ENCODE measurements at regions of chr19 and their contacts with region 1.

Region 1: GRCh38 chr19:7137120-7137519 is 67.6 kb downstream of the ZNF557 start:
- DNase-seq: no peak
- H3K4me3 ChIP-seq: no peak overlapping the region
- H3K27ac ChIP-seq: no peak overlapping the region
- H3K4me1 ChIP-seq: no peaks in the 10 kb centered on the region
- H3K27me3 ChIP-seq: no peaks in the 10 kb centered on the region
- CTCF ChIP-seq: no peak

Region 2: DNA sequence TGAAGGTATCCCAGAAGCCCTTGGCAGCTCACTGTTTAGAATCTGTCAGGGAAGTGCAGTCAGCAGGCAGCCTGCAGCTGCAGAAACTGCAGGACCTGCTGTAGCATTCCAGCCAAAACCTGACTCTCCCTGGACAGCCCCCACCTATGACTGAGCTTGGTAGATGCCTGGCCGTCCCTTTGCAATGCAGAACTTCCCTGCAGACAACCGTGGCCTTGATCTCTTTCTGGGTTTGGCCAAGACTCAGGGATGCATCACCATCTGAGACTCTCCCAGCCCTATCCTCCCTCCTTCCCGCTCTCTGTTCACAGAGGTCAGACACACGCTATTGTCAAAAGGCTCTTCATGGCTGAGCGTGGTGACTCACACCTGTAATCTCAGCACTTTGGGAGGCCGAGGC is 31.8 kb after region 1 on chr19:
- CTCF ChIA-PET with region 1: no interaction called
- POLR2A ChIA-PET with region 1: interaction called, 10 read pairs
- intact Hi-C with region 1: no loop called
- DNase-seq: no peak
- H3K4me3 ChIP-seq: no peak overlapping the region
- H3K27ac ChIP-seq: no peak overlapping the region
- H3K4me1 ChIP-seq: no peaks in the 10 kb centered on the region
- H3K27me3 ChIP-seq: no peaks in the 10 kb centered on the region
- CTCF ChIP-seq: no peak

Region 3: GRCh38 chr19:7348587-7349230 is 211.6 kb after region 1 on chr19 and contains the start of gene ARHGEF18:
- CTCF ChIA-PET with region 1: no interaction called
- POLR2A ChIA-PET with region 1: no interaction called
- intact Hi-C with region 1: no loop called
- DNase-seq: no peak
- H3K4me3 ChIP-seq: no peak within 1 kb of the TSS
- H3K27ac ChIP-seq: no peak within 1 kb of the TSS
- H3K4me1 ChIP-seq: no peaks in the 10 kb centered on the region
- H3K27me3 ChIP-seq: peaks cover 7% of the 10 kb centered on the region
- CTCF ChIP-seq: no peak
- total RNA-seq, gene ARHGEF18: 33.4 and 34.9 TPM in 2 replicates

Region 4: GRCh38 chr19:7460562-7460966 is 323.4 kb after region 1 on chr19:
- CTCF ChIA-PET with region 1: no interaction called
- POLR2A ChIA-PET with region 1: no interaction called
- intact Hi-C with region 1: no loop called
- DNase-seq: no peak
- H3K4me3 ChIP-seq: no peak overlapping the region
- H3K27ac ChIP-seq: no peak overlapping the region
- H3K4me1 ChIP-seq: no peaks in the 10 kb centered on the region
- H3K27me3 ChIP-seq: no peaks in the 10 kb centered on the region
- CTCF ChIP-seq: no peak

Measured in A673 (cell line).